HAP-1 (cell line): ENCODE measurements at regions of chr1 and their contacts with region 1.

Region 1: GRCh38 chr1:43774359-43774758 is 67.0 kb downstream of the ST3GAL3 start:
- DNase-seq: no peak
- H3K4me3 ChIP-seq: no peak overlapping the region
- H3K4me1 ChIP-seq: peaks cover 22% of the 10 kb centered on the region
- H3K27me3 ChIP-seq: no peaks in the 10 kb centered on the region

Region 2: DNA sequence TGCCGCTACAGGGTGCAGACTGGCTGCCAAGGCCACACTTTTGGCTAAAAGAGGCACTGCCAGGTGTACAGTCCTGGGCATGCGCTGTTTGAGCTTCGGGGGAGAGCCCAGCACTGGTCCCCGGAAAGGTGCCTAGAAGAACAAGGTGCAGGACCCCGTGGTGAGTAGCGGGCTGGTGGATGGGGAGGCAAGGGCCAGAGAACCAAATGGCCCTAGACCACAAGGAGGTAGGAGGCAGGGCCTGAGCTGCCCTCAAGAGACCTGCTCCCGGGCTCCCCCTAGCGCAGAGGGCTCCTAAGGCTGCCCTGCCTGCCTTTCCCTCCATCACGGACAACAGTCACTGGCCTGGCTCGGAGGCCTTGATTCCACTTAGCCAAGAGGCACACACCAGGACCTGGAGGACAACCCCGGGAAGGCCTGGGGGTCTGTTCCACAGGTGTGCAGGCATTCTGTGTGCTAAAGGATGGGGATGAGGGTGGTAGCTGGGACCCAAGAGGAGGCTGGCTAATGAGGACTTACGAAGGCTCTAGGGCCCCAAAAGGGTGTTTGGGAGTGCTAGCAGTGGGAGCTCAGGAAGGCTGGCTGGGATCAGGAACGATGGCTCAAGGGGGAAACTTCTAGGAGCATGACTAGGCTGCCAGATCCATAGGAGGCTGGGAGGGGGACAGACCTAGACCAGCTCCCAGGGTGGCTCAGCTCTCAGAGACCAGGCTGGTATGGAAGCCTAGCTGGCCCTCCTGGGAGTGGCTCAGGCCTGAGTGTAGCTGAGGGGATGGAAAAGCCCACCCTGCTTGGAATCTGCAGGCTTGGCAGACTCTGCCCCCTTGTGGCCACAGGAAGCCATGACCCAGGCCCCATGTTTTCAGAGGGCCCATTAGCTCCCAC is 160.0 kb after region 1 on chr1:
- in situ Hi-C with region 1: loop called (anchors 5 kb)
- DNase-seq: peak; percentile 63 to 87
- H3K4me3 ChIP-seq: no peak overlapping the region
- H3K4me1 ChIP-seq: peaks cover 3% of the 10 kb centered on the region; the same call in 1 of the 2 replicates
- H3K27me3 ChIP-seq: no peaks in the 10 kb centered on the region